MCF 10A (cell line): ENCODE measurements at regions of chr12 and their contacts with region 1.

Region 1: DNA sequence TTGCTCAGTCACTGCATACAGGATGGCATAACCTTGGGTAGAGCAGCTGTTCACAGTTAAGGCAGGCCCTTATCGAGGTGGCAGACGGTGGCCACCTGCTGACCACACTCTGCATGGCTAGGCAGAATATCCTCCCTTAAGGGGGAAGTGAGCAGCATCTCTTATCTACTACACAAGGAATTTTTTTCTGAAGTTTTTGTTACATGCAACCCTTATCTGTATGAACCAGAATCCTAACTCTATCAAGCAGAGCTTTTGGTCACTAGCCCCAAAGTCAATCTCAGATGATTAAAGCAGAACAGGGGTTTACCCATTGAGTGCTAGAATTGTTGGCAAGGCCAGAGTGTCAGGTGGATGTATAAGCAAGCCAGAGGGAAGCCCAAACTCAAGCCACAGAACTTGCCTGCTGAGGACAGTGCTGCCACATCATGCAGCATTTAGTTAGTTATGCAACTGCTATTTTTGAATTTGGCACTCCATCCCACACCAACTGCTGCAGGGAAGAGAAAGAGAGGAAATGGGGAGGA is 192.8 kb downstream of the TBX5 start:
- DNase-seq: peak; percentile 13
- H3K4me3 Mint-ChIP-seq: no peak overlapping the region
- H3K27ac Mint-ChIP-seq: no peak overlapping the region
- H3K4me1 Mint-ChIP-seq: no peaks in the 10 kb centered on the region
- H3K27me3 Mint-ChIP-seq: peaks cover 51% of the 10 kb centered on the region
- CTCF ChIP-seq: no peak

Region 2: DNA sequence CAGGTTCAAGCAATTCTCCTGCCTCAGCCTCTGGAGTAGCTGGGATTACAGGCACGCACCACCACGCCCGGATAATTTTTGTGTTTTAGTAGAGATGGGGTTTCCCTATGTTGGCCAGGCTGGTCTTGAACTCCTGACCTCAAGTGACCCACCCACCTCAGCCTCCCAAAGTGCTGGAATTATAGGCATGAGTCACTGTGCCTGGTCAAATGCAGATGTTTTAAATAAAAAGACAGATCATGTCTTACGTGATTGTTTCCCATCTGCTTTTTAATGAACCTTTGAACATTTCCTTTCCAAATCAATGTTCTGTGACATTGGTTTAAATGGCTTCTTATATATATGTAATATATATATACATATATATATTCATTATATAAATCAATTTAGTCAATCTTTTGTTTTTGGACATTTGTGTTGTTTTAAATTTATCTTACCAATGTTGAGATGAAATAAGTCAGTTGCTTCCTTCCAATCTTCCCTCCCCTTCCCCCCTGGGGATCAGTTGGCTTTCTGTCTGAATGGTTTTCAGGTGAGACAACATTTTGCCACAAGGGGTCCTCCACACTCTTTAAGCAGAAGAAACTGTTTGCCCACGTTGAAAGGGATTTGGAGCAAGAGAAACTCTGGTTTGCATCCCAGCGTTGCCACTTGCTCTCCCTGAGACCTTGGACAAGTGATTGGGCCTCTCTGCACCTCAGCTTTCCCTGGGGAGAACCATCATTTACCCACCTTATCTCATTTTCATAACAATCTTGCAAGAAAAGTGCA is 199.4 kb before region 1 on chr12:
- CTCF ChIA-PET with region 1: interaction called, 3 read pairs
- POLR2A ChIA-PET with region 1: no interaction called
- intact Hi-C with region 1: loop called (anchors 2 kb)
- DNase-seq: peak; percentile 45
- H3K4me3 Mint-ChIP-seq: no peak overlapping the region
- H3K27ac Mint-ChIP-seq: no peak overlapping the region
- H3K4me1 Mint-ChIP-seq: peaks cover 8% of the 10 kb centered on the region
- H3K27me3 Mint-ChIP-seq: peaks cover 35% of the 10 kb centered on the region
- CTCF ChIP-seq: peak; percentile 31

Region 3: GRCh38 chr12:114226241-114226928 is 13.3 kb after region 1 on chr12:
- CTCF ChIA-PET with region 1: no interaction called
- POLR2A ChIA-PET with region 1: no interaction called
- intact Hi-C with region 1: no loop called
- DNase-seq: no peak
- H3K4me3 Mint-ChIP-seq: no peak overlapping the region
- H3K27ac Mint-ChIP-seq: no peak overlapping the region
- H3K4me1 Mint-ChIP-seq: peaks cover 5% of the 10 kb centered on the region
- H3K27me3 Mint-ChIP-seq: peaks cover 41% of the 10 kb centered on the region
- CTCF ChIP-seq: no peak